ENCODE measurements at regions of chr5 and their contacts with region 1.

Region 1: GRCh38 chr5:153964880-153965645 is 73.6 kb downstream of the FAM114A2 start:
- DNase-seq: peak; percentile 55
- ATAC-seq: peak; percentile 94
- H3K4me3 ChIP-seq: no peak overlapping the region
- H3K27ac ChIP-seq: no peak overlapping the region
- H3K4me1 ChIP-seq: no peaks in the 10 kb centered on the region
- H3K27me3 ChIP-seq: no peaks in the 10 kb centered on the region
- CTCF ChIP-seq: peak; percentile 89
- EP300 ChIP-seq: no peak
- POLR2A ChIP-seq: no peak
- RAD21 ChIP-seq: peak; percentile 82

Region 2: GRCh38 chr5:152532714-152533113 is 1432.3 kb before region 1 on chr5:
- CTCF ChIA-PET with region 1: interaction called, 29 read pairs
- POLR2A ChIA-PET with region 1: no interaction called
- in situ Hi-C with region 1: loop called (anchors 5 kb)
- intact Hi-C with region 1: no loop called
- DNase-seq: peak; percentile 33
- ATAC-seq: peak; percentile 70
- H3K4me3 ChIP-seq: no peak overlapping the region
- H3K27ac ChIP-seq: no peak overlapping the region
- H3K4me1 ChIP-seq: no peaks in the 10 kb centered on the region
- H3K27me3 ChIP-seq: no peaks in the 10 kb centered on the region; a peak in 2 of 5 replicates
- CTCF ChIP-seq: peak; percentile 66
- EP300 ChIP-seq: no peak
- POLR2A ChIP-seq: no peak
- RAD21 ChIP-seq: no peak

Region 3: DNA sequence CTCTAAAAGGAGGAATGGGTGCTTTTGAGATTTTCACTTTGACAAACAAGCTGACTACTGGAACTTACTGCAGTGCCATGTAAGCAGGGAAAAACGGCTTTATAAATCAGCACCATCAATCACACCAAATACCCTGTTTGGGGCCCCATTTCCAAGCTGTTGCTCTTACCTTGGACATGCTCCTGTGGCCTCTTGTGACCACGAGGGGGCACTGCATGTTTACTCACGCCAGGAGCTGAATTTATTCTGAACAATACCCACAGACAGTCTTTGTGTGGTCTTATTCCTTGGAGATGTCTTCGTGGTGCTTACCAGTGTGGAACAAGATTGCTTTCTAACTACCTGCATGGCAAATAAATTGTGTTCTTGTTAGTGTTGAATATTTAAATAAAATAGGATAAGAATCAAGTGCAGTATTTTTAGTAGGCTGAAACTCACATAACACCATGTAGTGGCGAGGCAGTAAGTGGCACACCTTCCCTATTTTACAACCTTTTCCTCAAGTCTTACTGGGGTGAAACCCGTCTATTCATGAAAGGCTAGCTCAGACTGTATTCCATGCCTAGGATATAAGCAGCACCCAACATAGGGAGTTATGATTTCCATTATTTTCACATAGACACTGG is 1404.4 kb before region 1 on chr5:
- CTCF ChIA-PET with region 1: interaction called, 13 read pairs
- POLR2A ChIA-PET with region 1: no interaction called
- in situ Hi-C with region 1: no loop called
- intact Hi-C with region 1: loop called (anchors 1 kb)
- DNase-seq: peak; percentile 13
- ATAC-seq: peak; percentile 78
- H3K4me3 ChIP-seq: no peak overlapping the region
- H3K27ac ChIP-seq: no peak overlapping the region
- H3K4me1 ChIP-seq: no peaks in the 10 kb centered on the region
- H3K27me3 ChIP-seq: no peaks in the 10 kb centered on the region
- CTCF ChIP-seq: peak; percentile 70
- EP300 ChIP-seq: no peak
- POLR2A ChIP-seq: no peak
- RAD21 ChIP-seq: no peak

Region 4: DNA sequence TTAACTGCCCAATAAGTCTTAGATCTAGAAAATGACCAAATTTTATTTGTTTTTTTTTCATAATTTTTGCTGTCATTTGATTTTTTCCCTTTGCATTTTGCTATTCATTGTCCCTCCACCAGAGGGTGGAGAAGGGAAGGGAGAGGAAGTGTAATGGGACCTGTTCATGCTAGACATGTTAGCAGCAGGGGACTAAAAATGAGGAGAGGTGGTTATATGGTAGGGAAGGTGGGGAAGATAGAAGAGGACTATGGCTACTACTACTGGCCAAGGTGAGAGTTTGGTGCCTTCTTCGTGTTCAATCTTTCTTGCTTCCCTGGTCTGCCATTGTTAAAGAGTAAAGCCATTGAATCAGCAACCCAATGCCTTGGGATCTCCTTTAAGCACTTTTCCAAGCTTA is 468.2 kb before region 1 on chr5:
- CTCF ChIA-PET with region 1: interaction called, 13 read pairs
- POLR2A ChIA-PET with region 1: no interaction called
- in situ Hi-C with region 1: loop called (anchors 5 kb)
- intact Hi-C with region 1: no loop called
- DNase-seq: no peak
- ATAC-seq: peak; percentile 56; the same call in 2 of the 3 replicates
- H3K4me3 ChIP-seq: no peak overlapping the region
- H3K27ac ChIP-seq: no peak overlapping the region
- H3K4me1 ChIP-seq: no peaks in the 10 kb centered on the region
- H3K27me3 ChIP-seq: peaks cover 0 to 4% of the 10 kb centered on the region in 2 experiments; a peak in 1 of 5 replicates
- CTCF ChIP-seq: peak; percentile 46; the same call in 1 of the 2 replicates
- EP300 ChIP-seq: no peak
- POLR2A ChIP-seq: no peak
- RAD21 ChIP-seq: no peak